ENCODE measurements at regions of chr18 and their contacts with region 1.

Region 1: DNA sequence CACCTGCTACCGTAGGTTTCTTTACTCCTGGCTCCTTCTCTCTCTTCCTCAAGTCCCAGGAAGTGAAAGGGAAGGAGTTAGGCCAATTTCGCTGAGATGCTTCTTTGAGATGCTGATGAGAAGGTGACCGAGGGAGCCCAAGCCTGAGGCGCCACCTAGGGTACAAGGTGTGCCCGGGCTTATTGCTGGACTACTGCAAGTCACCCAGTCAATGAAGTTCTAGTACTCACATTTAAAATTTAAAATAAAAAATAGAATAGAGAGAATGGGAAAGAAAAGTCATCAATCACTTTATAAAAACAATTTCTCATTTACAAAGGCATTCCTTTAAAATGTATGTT is 45.3 kb downstream of the ACAA2 start:
- DNase-seq: peak; percentile 61 to 68
- H3K4me3 ChIP-seq: no peak overlapping the region
- H3K4me3 Mint-ChIP-seq: no peak overlapping the region
- H3K27ac Mint-ChIP-seq: no peak overlapping the region
- H3K4me1 ChIP-seq: no peaks in the 10 kb centered on the region
- H3K4me1 Mint-ChIP-seq: peaks cover 9% of the 10 kb centered on the region
- H3K27me3 ChIP-seq: no peaks in the 10 kb centered on the region
- H3K27me3 Mint-ChIP-seq: no peaks in the 10 kb centered on the region
- CTCF ChIP-seq: peak; percentile 30 to 70

Region 2: GRCh38 chr18:49510393-49511115 is 257.5 kb before region 1 on chr18:
- CTCF ChIA-PET with region 1: interaction called, 3 read pairs
- POLR2A ChIA-PET with region 1: no interaction called
- intact Hi-C with region 1: loop called (anchors 2 kb)
- DNase-seq: peak in 1 of 2 experiments; percentile 55
- H3K4me3 ChIP-seq: no peak overlapping the region
- H3K4me3 Mint-ChIP-seq: no peak overlapping the region
- H3K27ac Mint-ChIP-seq: no peak overlapping the region
- H3K4me1 ChIP-seq: no peaks in the 10 kb centered on the region
- H3K4me1 Mint-ChIP-seq: no peaks in the 10 kb centered on the region
- H3K27me3 ChIP-seq: no peaks in the 10 kb centered on the region
- H3K27me3 Mint-ChIP-seq: no peaks in the 10 kb centered on the region
- CTCF ChIP-seq: peak; percentile 47 to 70

Region 3: DNA sequence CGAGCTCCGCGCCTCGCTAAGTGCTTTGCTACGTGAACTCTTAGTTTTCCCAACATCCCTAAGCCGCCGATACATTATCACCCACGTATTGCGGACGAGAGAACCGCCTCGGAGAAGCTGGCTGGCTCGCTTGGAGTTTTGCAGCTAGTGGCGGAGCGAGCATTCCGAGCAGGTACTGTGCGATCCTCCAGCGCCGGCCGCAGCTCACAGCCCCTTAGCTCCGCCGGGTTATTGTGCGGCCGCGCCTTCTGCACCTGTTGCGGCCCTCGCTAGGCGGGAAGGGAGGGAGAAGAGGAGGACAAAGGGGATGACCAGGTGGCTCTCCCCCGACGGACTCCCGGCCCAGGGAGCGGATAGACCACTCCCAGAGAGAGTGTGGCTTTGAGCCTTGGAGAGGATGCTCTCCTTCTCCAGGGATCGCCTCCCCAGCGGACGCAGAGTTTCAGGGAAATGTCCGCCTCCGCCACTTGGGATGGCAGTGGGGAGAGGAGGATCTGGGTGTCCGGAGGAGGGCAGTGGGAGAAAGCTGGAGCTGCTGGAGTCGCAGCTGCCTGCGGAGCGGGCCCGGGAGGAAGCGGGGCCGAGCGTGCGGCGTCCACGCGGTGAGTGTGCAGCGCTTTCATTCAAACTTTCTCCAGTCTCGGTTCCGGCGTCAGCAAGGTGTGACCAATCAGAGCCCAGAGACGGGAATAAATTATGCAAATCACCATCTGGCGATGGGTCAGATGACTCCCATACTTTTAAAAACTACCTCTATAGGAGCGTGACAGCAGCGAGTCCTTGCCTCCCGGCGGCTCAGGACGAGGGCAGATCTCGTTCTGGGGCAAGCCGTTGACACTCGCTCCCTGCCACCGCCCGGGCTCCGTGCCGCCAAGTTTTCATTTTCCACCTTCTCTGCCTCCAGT is 206.5 kb before region 1 on chr18 and contains the start of gene LIPG:
- CTCF ChIA-PET with region 1: interaction called, 3 read pairs
- POLR2A ChIA-PET with region 1: no interaction called
- intact Hi-C with region 1: loop called (anchors 2 kb)
- DNase-seq: peak; percentile 82 to 84
- H3K4me3 ChIP-seq: peak within 1 kb of the TSS; percentile 56
- H3K4me3 Mint-ChIP-seq: peak within 1 kb of the TSS; percentile 98
- H3K27ac Mint-ChIP-seq: peak within 1 kb of the TSS; percentile 92
- H3K4me1 ChIP-seq: no peaks in the 10 kb centered on the region
- H3K4me1 Mint-ChIP-seq: no peaks in the 10 kb centered on the region
- H3K27me3 ChIP-seq: no peaks in the 10 kb centered on the region
- H3K27me3 Mint-ChIP-seq: no peaks in the 10 kb centered on the region
- CTCF ChIP-seq: no peak
- total RNA-seq, gene LIPG: 86.7 and 87.5 TPM in 2 replicates

Region 4: DNA sequence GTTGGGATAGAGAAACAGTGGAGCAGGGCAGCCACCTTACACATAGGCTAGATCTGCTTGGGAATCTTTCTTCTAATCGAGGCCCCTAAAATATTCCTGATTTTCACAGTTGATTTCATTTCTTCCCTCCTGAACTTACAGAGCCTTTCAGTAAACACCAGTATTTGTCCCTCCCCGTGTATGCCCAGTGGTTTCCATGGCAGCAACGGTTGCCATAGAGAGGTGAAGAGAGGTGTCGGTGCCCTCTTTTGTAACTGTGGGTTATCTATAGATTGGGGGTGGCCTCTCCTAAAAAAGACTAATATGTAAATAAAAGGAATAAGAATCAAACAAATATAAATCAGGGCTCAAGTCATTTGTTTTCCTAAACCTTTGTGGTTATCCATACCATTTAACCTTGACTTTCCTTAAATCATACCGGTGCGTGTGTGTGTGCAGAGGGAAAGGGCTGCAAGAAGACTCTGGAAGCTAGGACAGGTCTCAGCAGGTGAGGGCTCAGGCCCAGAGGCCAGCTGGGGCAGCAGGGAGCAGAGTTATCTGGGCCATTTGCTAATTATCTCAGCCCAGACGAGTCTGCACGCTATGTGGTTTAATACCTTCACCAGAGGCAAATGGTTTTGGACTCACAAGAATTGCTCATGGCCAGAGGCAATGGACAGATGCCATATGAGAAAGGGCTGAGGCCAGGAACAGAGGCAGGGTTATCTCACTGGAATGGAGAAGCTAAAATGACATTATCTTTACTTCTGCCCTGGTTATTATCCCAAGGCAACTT is 170.7 kb before region 1 on chr18:
- CTCF ChIA-PET with region 1: no interaction called
- POLR2A ChIA-PET with region 1: no interaction called
- intact Hi-C with region 1: loop called (anchors 10 kb)
- DNase-seq: peak; percentile 7 to 47
- H3K4me3 ChIP-seq: no peak overlapping the region
- H3K4me3 Mint-ChIP-seq: no peak overlapping the region
- H3K27ac Mint-ChIP-seq: no peak overlapping the region
- H3K4me1 ChIP-seq: peaks cover 4% of the 10 kb centered on the region; the same call in 1 of the 2 replicates
- H3K4me1 Mint-ChIP-seq: peaks cover 6% of the 10 kb centered on the region
- H3K27me3 ChIP-seq: no peaks in the 10 kb centered on the region
- H3K27me3 Mint-ChIP-seq: no peaks in the 10 kb centered on the region
- CTCF ChIP-seq: no peak

Region 5: GRCh38 chr18:49690307-49690706 is 77.7 kb before region 1 on chr18:
- CTCF ChIA-PET with region 1: no interaction called
- POLR2A ChIA-PET with region 1: no interaction called
- intact Hi-C with region 1: loop called (anchors 2 kb)
- DNase-seq: no peak
- H3K4me3 ChIP-seq: no peak overlapping the region
- H3K4me3 Mint-ChIP-seq: no peak overlapping the region
- H3K27ac Mint-ChIP-seq: no peak overlapping the region
- H3K4me1 ChIP-seq: peaks cover 19% of the 10 kb centered on the region
- H3K4me1 Mint-ChIP-seq: peaks cover 20% of the 10 kb centered on the region
- H3K27me3 ChIP-seq: no peaks in the 10 kb centered on the region
- H3K27me3 Mint-ChIP-seq: no peaks in the 10 kb centered on the region
- CTCF ChIP-seq: no peak

Measured in Caco-2 (cell line).